Activated naive CD4-positive, alpha-beta T cell treated with anti-CD3 and anti-CD28 coated beads, Interleukin-2, amount 10 ng/mL, durations not matched to agents 7 days and 5 days (primary cell): ENCODE measurements at regions of chr18 and their contacts with region 1.

Region 1: DNA sequence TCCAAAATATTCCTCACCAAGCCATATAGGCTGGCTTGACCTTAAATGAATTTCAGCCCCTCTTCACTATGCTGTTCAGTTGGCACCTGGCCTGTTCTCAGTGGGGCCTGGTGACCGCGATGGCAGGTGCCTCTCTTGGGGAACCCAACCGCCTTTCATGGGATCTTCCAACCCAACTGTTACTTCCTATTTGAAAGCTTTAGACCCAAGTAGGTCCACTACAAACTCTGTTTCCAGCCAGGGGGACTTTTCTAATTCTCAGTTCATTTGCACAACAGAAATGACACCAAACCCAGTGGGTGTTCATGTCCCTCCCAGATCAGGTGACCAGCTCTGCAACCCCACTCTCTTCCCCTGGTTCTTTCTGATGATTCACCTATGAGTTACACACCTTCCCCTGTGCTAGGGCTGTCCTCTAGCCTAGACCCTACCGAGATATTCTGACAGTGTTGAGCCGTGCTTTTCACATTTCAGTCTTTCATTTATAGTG is 35.6 kb upstream of the NDUFV2 start:
- DNase-seq: no peak
- H3K4me3 Mint-ChIP-seq: no peak overlapping the region
- H3K27ac Mint-ChIP-seq: peak overlapping the region; percentile 54
- H3K4me1 Mint-ChIP-seq: peaks cover 12% of the 10 kb centered on the region
- H3K27me3 Mint-ChIP-seq: peaks cover 4% of the 10 kb centered on the region

Region 2: GRCh38 chr18:9147440-9148202 is 80.8 kb after region 1 on chr18:
- CTCF ChIA-PET with region 1: interaction called, 31 read pairs
- DNase-seq: peak; percentile 38
- H3K4me3 Mint-ChIP-seq: no peak overlapping the region
- H3K27ac Mint-ChIP-seq: peak overlapping the region; percentile 81
- H3K4me1 Mint-ChIP-seq: peaks cover 70% of the 10 kb centered on the region
- H3K27me3 Mint-ChIP-seq: no peaks in the 10 kb centered on the region

Region 3: DNA sequence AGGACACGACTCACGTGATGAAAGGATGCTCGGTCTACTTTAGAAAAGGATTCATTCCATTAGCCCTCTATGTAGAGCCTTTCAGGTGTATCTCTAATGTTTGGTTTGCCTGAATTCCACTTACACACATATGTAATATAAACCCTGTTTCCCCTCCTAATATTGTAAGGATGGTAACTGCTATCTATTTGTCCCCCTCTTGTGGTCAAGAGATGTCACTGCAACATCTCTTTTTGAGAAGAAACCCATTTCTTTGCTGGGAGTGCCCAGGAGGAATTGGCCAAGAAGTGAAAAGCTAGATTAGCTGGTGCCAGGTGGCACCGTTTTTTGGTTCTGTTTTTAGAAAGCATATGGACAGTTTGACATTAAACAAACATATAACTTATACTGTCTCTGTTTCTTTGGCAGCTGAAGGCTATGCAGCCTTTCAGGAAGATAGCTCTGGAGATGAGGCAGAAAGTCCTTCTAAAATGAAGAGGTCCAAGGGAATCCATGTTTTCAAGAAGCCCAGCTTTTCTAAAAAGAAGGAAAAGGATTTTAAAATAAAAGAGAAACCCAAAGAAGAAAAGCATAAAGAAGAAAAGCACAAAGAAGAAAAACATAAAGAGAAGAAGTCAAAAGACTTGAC is 449.7 kb after region 1 on chr18:
- CTCF ChIA-PET with region 1: interaction called, 25 read pairs
- DNase-seq: no peak
- H3K4me3 Mint-ChIP-seq: no peak overlapping the region
- H3K27ac Mint-ChIP-seq: no peak overlapping the region
- H3K4me1 Mint-ChIP-seq: peaks cover 4% of the 10 kb centered on the region
- H3K27me3 Mint-ChIP-seq: no peaks in the 10 kb centered on the region